B cell (primary cell): ENCODE measurements at regions of chr12 and their contacts with region 1.

Region 1: GRCh38 chr12:14769969-14770495 is 33.2 kb downstream of the WBP11 start:
- DNase-seq: peak; percentile 97
- ATAC-seq: peak; percentile 57
- H3K4me3 ChIP-seq: peak overlapping the region; percentile 78 to 98 (median 93)
- H3K4me3 Mint-ChIP-seq: peak overlapping the region; percentile 97
- H3K27ac ChIP-seq: peak overlapping the region; percentile 94 to 96
- H3K27ac Mint-ChIP-seq: peak overlapping the region; percentile 97
- H3K4me1 ChIP-seq: peaks cover 28 to 45% of the 10 kb centered on the region in 2 donors
- H3K4me1 Mint-ChIP-seq: peaks cover 55% of the 10 kb centered on the region
- H3K27me3 ChIP-seq: no peaks in the 10 kb centered on the region
- H3K27me3 Mint-ChIP-seq: no peaks in the 10 kb centered on the region
- CTCF ChIP-seq: peak; percentile 86

Region 2: DNA sequence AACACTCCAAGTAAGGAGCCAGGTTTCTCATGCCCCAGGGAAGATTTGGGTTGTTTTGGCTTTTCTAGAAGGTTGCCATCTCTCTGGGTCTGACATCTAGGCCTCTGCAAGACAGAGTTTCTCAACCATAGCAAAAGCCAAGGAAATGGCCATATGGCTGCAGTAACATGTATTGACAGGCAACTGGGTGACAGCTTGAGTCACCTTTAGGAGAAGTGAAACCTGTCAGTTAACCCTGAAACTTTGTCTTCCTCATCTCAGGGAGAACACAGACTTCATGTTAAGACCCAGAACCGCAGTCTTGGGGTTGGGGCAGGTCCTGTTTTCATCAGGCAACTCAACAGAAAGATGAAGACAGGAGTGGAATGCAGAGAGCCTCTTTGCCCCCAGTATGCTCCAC is 156.3 kb before region 1 on chr12:
- CTCF ChIA-PET with region 1: interaction called, 3 read pairs
- POLR2A ChIA-PET with region 1: no interaction called
- intact Hi-C with region 1: loop called (anchors 1 kb)
- DNase-seq: peak; percentile 88
- ATAC-seq: peak; percentile 82
- H3K4me3 ChIP-seq: peak overlapping the region in 3 of 5 experiments; percentile 23 to 60 (median 54)
- H3K4me3 Mint-ChIP-seq: peak overlapping the region; percentile 80
- H3K27ac ChIP-seq: peak overlapping the region; percentile 73 to 81
- H3K27ac Mint-ChIP-seq: peak overlapping the region; percentile 92
- H3K4me1 ChIP-seq: peaks cover 28 to 36% of the 10 kb centered on the region in 2 donors
- H3K4me1 Mint-ChIP-seq: peaks cover 34% of the 10 kb centered on the region
- H3K27me3 ChIP-seq: no peaks in the 10 kb centered on the region
- H3K27me3 Mint-ChIP-seq: no peaks in the 10 kb centered on the region
- CTCF ChIP-seq: no peak

Region 3: GRCh38 chr12:14803011-14803829 is 33.2 kb after region 1 on chr12 and contains the starts of genes C12orf60 and WBP11:
- CTCF ChIA-PET with region 1: interaction called, 19 read pairs
- POLR2A ChIA-PET with region 1: interaction called, 41 read pairs
- intact Hi-C with region 1: loop called (anchors 1 kb)
- DNase-seq: peak; percentile 96
- ATAC-seq: peak; percentile 94
- H3K4me3 ChIP-seq: peak within 1 kb of the TSS; percentile 89 to 99 (median 93)
- H3K4me3 Mint-ChIP-seq: no peak within 1 kb of the TSS
- H3K27ac ChIP-seq: peak within 1 kb of the TSS; percentile 98
- H3K27ac Mint-ChIP-seq: peak within 1 kb of the TSS; percentile 41
- H3K4me1 ChIP-seq: peaks cover 13 to 17% of the 10 kb centered on the region in 2 donors
- H3K4me1 Mint-ChIP-seq: peaks cover 11% of the 10 kb centered on the region
- H3K27me3 ChIP-seq: no peaks in the 10 kb centered on the region
- H3K27me3 Mint-ChIP-seq: no peaks in the 10 kb centered on the region
- CTCF ChIP-seq: no peak
- total RNA-seq, gene C12orf60: 1.2 and 1.4 TPM in 2 replicates
- total RNA-seq, gene WBP11: 77.3 and 84.7 TPM in 2 replicates

Region 4: DNA sequence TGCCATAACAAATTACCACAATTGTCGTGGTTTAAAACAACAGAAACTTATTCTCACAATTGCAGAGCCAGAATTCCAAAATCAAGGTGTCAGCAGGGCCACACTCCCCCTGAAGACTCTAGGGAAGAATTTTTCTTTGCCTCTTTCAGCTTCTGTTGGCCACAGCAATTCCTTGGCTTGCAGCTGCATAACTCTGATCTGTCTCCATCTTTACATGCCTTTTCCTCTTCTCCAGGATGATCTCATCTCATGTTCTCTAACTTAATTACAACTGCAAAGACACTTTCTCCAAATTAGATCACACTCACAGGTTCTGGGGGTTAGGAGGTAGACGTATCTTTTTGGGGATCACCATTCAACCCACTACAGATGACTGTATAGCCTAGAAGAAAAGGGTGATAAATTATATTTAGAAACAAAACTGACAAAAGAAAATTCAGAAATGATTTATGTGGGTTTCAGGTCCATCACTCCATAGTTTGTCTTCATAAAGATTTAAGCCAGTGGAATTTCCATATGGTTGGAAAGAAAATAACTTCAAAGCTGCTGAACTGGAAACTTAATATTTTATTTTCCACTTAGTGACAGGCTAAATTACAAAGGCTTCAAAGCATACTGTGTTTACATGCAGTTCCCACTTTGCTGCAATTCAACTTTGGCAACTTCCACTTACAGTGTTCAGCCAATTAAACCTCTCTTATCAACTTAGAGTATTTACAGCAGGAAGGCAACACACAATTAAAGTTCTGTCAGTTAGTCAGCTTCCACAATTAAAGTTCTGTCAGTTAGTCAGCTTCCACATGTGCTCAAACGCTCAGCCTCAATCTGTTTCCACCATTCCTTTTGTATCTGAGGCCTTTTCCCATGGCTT is 805.9 kb after region 1 on chr12:
- CTCF ChIA-PET with region 1: no interaction called
- POLR2A ChIA-PET with region 1: no interaction called
- intact Hi-C with region 1: loop called (anchors 5 kb)
- DNase-seq: no peak
- ATAC-seq: no peak
- H3K4me3 ChIP-seq: no peak overlapping the region
- H3K4me3 Mint-ChIP-seq: no peak overlapping the region
- H3K27ac ChIP-seq: no peak overlapping the region
- H3K27ac Mint-ChIP-seq: no peak overlapping the region
- H3K4me1 ChIP-seq: peaks cover 7 to 9% of the 10 kb centered on the region in 2 donors
- H3K4me1 Mint-ChIP-seq: peaks cover 6% of the 10 kb centered on the region
- H3K27me3 ChIP-seq: no peaks in the 10 kb centered on the region
- H3K27me3 Mint-ChIP-seq: no peaks in the 10 kb centered on the region
- CTCF ChIP-seq: no peak